GM18951 (cell line): ENCODE measurements at regions of chr2 and their contacts with region 1.

Region 1: DNA sequence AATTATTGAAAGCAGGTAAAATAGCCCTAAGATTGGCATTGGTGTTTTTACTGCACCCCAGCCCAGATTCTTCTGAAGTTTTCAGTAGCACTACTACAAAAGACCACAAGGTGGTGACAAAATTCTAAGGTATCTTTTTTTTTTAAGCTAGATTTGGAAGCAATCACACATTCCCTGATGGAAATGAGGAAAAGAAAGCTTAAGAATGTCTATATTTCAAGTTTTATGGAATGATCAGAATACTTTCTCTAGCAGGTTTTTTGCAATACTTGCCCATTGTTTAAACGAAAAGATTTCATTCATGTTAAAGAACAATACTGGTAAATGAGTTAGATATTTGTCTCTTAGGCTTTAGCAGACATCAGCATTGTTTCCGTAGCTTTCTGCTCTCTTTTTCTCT is 32.1 kb upstream of the ZNF638 start:
- POLR2A ChIP-seq: no peak

Region 2: DNA sequence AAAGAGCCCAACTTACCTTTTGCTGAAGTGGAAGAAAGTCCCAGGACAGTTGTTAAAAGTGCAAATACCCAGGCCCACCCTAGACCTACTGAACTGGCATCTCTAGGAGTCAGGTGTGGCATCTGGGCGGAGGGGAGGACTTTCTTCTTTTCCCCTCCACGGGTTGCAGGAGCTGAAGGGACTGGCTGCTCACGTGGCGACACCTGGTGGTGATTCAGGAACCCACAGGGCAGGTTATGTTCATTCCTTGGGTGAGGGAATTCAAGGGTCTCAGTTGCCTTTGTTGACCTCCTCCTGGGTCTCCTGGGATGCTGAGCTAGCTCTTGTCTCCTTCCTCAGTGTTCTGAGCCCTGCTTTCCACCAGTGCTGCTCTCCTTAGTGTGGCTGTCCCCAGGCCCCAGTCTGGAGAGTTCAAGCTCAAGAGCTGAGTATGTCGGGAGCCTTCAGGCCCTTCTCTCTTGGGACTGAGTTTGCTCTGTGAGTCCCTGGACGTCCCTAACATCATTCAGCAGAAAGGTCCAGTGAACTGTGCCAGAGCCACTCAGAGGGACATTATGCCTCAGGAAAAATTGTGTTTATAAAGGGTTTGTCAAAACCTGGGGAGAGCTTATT is 210.8 kb after region 1 on chr2:
- in situ Hi-C with region 1: loop called (anchors 10 kb)
- POLR2A ChIP-seq: no peak

Region 3: DNA sequence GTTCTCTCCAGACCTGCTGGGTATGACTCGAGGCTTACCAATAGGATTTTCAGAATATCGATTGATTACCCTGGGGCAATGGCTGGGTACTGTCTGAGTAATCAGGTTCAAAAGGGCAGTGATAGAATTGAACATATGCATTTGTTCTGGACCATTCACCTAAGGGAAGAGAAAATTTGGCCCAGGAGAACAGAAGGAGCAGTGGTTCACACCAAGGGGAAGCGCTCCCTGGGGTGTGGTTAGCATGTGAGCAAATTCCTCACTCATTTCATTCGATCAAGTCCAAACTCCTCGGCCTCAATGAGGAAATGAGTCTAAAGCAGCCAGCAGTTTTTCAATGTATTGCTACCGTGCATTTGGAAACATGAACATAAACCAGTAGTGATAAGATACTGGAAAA is 792.6 kb after region 1 on chr2:
- in situ Hi-C with region 1: no loop called
- POLR2A ChIP-seq: no peak